MCF 10A (cell line): ENCODE measurements at regions of chr3 and their contacts with region 1.

Region 1: GRCh38 chr3:123960781-123961507 is at the start of gene CCDC14:
- DNase-seq: peak; percentile 96
- H3K4me3 Mint-ChIP-seq: peak within 1 kb of the TSS; percentile 93
- H3K27ac Mint-ChIP-seq: peak within 1 kb of the TSS; percentile 95
- H3K4me1 Mint-ChIP-seq: peaks cover 12% of the 10 kb centered on the region
- H3K27me3 Mint-ChIP-seq: no peaks in the 10 kb centered on the region
- CTCF ChIP-seq: no peak
- total RNA-seq, gene CCDC14: 23.8 and 31.1 TPM in 2 replicates

Region 2: GRCh38 chr3:122200661-122201060 is 1760.3 kb before region 1 on chr3:
- CTCF ChIA-PET with region 1: no interaction called
- POLR2A ChIA-PET with region 1: no interaction called
- intact Hi-C with region 1: no loop called
- DNase-seq: peak; percentile 13
- H3K4me3 Mint-ChIP-seq: no peak overlapping the region
- H3K27ac Mint-ChIP-seq: no peak overlapping the region
- H3K4me1 Mint-ChIP-seq: no peaks in the 10 kb centered on the region
- H3K27me3 Mint-ChIP-seq: peaks cover 11% of the 10 kb centered on the region
- CTCF ChIP-seq: no peak

Region 3: DNA sequence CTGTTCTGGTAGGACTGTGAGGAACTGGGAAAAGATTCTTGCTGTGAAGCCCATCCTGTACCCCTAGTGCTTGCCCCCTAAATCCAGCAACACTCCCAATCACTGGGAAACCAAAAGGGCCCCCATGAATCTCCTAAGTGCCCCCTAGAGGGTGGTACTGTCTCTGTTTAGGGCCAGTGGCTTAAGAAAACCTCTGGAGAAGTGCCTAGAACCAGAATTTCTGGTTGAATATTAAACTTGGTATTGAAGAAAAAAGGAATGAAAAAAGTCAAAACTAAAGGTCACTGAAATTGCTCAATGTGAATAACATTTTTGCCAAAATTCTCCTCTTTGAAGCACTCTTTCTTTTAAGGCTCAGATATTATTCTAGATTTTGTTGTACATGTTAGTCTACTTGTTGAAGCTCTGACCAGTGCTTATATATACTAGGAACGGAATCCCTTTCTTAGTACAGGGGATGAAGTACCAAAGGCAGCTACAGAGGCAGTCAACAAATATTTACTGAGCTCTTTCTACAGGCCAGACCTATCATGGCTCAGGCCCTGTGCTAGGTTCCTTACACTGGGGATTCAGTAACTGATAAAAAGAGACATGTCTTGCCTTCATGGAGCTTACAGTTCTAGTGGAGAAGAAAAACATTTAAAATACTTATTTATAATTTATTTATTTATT is 215.6 kb before region 1 on chr3:
- CTCF ChIA-PET with region 1: no interaction called
- POLR2A ChIA-PET with region 1: no interaction called
- intact Hi-C with region 1: loop called (anchors 10 kb)
- DNase-seq: no peak
- H3K4me3 Mint-ChIP-seq: no peak overlapping the region
- H3K27ac Mint-ChIP-seq: no peak overlapping the region
- H3K4me1 Mint-ChIP-seq: peaks cover 14% of the 10 kb centered on the region
- H3K27me3 Mint-ChIP-seq: no peaks in the 10 kb centered on the region
- CTCF ChIP-seq: peak; percentile 25